Tibial artery (tissue), 4 donors: ENCODE measurements at regions of chr1 and their contacts with region 1.

Region 1: DNA sequence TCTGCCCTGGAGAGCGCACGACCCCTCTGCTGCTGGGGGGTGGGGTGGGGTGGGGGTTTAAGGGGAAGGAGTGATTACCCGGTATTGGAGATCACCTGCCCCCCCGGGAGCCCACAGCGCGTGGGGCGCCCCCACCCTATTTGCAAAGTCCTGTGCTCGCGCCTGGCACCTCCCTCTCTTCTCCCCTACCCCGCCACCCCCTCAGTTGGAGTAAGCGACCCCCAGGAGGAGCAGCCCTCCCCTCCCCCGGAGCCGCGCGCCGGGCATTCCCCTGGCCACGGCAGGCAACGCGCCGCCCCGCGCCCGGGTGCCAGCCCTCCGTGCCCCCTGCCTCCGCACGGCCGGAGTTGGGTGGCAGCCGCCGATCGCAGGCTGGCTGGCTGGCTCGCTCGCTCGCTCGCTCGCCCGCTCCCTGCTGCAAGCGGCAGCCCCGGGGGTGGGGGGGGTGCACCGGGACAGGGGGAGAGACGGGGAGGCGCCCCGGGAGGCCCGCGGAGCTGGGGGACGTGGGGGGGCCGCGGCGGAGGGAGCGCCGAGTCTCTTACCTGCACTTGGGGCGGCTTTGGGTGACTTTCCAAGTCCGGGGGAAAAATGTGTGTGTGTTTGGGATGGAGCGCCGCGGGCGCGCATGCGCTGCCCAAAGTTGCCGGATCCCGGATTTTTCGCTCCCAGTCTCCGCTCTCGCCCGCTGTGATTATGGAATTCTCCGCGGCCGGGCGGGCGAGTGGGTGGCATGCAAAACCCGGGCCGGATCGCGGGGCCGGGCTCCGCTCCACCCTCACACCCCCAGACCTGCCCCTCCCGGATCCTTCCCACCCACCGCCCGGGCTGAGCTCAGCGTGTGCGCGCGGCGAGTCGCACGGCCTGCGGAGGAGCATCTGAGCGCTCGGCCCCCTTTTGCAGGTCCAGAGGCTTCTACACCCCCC is at the start of gene CASZ1:
- DNase-seq: peak; percentile 52 to 82
- H3K4me3 ChIP-seq: peak within 1 kb of the TSS; percentile 58 to 75
- H3K27ac ChIP-seq: peak within 1 kb of the TSS; percentile 35 to 52
- H3K4me1 ChIP-seq: peaks cover 0 to 40% (median 33%) of the 10 kb centered on the region in 4 donors
- H3K27me3 ChIP-seq: peaks cover 0 to 54% of the 10 kb centered on the region in 2 donors
- CTCF ChIP-seq: no peak

Region 2: DNA sequence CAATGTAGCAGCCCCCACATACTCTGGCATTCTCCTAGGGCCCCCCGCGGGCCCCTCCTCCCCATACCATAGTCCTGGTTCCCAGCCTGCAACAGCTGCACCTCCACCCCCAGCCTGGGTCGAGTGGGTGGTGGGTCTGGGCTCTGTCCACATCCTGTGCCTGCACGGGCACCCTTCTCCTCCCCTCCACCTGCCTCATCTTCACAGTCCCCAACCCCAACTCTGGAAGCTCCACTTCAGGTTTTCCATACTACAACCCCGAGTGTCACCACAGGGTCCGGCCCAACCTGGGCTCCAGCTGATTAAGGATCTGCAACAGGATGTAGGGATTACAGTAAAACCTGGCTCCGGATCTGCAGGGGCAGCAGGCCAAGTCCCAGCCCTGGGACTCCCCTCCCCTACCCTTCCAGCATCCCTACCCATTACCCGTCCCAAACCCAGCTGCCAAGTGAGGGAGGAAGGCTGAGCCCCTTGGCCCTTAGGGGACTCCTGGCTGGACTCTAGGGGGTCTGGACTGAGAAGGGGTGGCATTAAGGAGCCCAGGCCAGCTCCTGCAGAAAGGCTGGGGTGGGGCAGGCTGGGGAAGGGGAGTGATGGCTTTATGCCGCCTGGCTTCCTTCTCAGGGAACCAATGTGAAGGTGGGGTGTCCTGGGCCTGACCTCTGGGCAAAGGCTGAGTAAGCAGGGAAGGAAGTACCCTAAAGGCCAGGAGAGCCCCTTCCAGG is 116.6 kb before region 1 on chr1:
- intact Hi-C with region 1: loop called (anchors 10 kb)
- DNase-seq: no peak
- H3K4me3 ChIP-seq: no peak overlapping the region
- H3K27ac ChIP-seq: no peak overlapping the region
- H3K4me1 ChIP-seq: peaks cover 0 to 97% (median 64%) of the 10 kb centered on the region in 4 donors
- H3K27me3 ChIP-seq: no peaks in the 10 kb centered on the region
- CTCF ChIP-seq: no peak